Astrocyte of the spinal cord (primary cell): ENCODE measurements at regions of chr1 and their contacts with region 1.

Region 1: GRCh38 chr1:23184212-23184934 is 15.7 kb upstream of the LUZP1 start:
- DNase-seq: peak; percentile 59
- H3K4me3 ChIP-seq: peak overlapping the region; percentile 27
- CTCF ChIP-seq: peak; percentile 46

Region 2: DNA sequence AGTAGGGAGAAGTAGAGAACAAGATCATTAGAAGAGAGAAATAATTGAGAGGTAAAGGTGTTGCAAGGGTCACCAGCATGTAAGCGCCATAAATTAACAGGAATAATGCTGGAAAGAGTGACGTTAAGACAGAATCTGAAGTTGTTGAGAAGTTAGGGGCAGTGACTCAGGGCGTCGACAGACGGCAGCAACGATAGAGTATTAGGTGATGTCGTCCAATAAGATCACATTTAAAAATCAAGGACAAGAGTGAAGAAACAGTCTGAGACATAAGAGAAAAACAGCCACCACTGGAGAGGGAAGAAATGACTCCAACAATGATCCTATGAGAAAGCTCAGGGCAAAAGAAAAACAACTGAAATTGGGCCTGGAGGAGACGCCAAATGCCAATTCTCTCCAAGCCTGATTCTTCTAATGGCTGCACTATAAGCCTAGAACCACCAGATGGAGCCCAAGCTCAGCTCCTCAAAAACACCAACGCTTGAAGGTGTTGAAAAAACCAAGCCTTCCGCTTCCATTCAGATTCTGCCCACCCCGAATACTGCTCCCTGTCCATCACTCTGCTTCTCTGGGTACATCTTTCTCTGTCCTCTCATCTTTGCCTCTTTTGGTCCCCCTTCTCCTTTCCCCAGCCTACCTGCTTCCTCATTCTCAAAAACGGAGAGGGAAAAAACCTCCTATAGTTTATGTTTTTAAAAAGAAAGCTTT is 85.8 kb before region 1 on chr1:
- in situ Hi-C with region 1: loop called (anchors 10 kb)
- DNase-seq: peak; percentile 78
- H3K4me3 ChIP-seq: no peak overlapping the region
- CTCF ChIP-seq: peak; percentile 94